CD8-positive, alpha-beta memory T cell (primary cell): ENCODE measurements at regions of chr5 and their contacts with region 1.

Region 1: DNA sequence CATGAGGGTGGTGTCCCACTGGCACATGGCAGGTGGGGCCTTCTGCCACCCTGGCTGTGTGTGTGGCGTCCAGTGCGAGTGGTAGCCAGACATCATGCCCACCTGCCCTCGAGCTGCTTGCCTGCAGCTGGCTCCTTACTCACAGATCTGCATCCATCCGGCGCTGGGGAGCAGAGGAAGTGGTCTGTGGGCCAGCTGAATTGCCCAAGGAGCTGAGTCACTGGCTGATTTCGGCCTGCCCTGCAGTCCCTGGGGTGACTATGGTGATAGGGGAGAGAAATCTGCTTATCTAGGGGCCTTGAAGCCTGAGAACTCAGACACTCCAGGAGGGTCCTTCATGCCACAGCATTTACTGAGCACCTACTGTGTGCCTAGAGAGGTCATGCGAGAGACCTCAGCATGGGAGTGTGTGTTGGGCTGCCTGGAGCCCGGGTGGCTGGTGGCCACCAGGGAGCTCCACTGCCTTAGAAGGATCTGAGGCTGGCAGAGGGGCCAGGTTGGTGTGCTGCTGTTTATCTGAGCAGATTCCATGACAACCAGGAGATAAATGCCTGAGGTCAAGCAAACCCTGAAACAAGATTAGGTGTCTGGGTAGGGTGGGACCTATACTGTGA is 57.1 kb downstream of the SLC22A5 start:
- DNase-seq: peak; percentile 37 to 83 (median 52)
- H3K4me3 ChIP-seq: peak overlapping the region; percentile 57
- H3K4me3 Mint-ChIP-seq: peak overlapping the region; percentile 61 to 89 (median 79)
- H3K27ac ChIP-seq: peak overlapping the region; percentile 84
- H3K27ac Mint-ChIP-seq: peak overlapping the region; percentile 95 to 99 (median 98)
- H3K4me1 ChIP-seq: peaks cover 100% of the 10 kb centered on the region
- H3K4me1 Mint-ChIP-seq: peaks cover 96 to 98% (median 97%) of the 10 kb centered on the region in 3 donors
- H3K27me3 ChIP-seq: no peaks in the 10 kb centered on the region
- H3K27me3 Mint-ChIP-seq: no peaks in the 10 kb centered on the region

Region 2: DNA sequence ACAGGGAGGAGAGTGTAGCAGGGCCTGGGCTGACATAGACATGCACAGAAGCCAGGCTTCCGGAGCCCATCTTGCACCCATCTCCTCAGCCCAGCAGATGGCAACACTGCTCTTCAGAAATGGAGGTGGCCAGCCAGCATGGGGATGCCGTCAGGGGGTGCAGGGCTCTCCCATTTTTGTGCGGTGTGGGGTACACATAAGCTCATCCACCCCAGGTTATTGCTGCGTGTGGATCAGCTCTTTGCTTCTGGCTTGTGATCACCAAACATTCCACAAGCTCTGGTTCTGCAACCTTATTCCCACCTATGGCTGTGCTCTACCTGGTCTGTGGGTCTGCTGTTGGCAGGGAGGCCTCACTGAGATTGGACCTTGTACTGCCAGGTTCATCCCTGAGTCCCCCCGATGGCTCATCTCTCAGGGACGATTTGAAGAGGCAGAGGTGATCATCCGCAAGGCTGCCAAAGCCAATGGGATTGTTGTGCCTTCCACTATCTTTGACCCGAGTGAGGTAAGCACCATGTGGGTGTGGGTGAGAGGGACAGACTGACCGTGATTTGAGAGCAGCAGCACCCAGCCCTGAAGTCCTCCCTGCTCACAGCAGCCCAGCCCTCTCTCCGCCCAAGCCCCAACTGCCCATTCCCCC is 39.9 kb before region 1 on chr5:
- CTCF ChIA-PET with region 1: interaction called, 17 read pairs
- POLR2A ChIA-PET with region 1: no interaction called
- DNase-seq: peak; percentile 60 to 86 (median 72)
- H3K4me3 ChIP-seq: no peak overlapping the region
- H3K4me3 Mint-ChIP-seq: peak overlapping the region in 1 of 7 donors; percentile 56
- H3K27ac ChIP-seq: no peak overlapping the region
- H3K27ac Mint-ChIP-seq: peak overlapping the region in 6 of 8 donors; percentile 7 to 85 (median 53)
- H3K4me1 ChIP-seq: peaks cover 19% of the 10 kb centered on the region
- H3K4me1 Mint-ChIP-seq: peaks cover 20 to 37% (median 23%) of the 10 kb centered on the region in 3 donors
- H3K27me3 ChIP-seq: no peaks in the 10 kb centered on the region
- H3K27me3 Mint-ChIP-seq: no peaks in the 10 kb centered on the region

Region 3: GRCh38 chr5:132437604-132438266 is 11.1 kb after region 1 on chr5:
- CTCF ChIA-PET with region 1: interaction called, 41 read pairs
- POLR2A ChIA-PET with region 1: interaction called, 15 read pairs
- DNase-seq: peak; percentile 35 to 82 (median 48)
- H3K4me3 ChIP-seq: peak overlapping the region; percentile 55
- H3K4me3 Mint-ChIP-seq: peak overlapping the region; percentile 62 to 86 (median 74)
- H3K27ac ChIP-seq: peak overlapping the region; percentile 45
- H3K27ac Mint-ChIP-seq: peak overlapping the region; percentile 89 to 98 (median 94)
- H3K4me1 ChIP-seq: peaks cover 95% of the 10 kb centered on the region
- H3K4me1 Mint-ChIP-seq: peaks cover 88 to 99% (median 95%) of the 10 kb centered on the region in 3 donors
- H3K27me3 ChIP-seq: no peaks in the 10 kb centered on the region
- H3K27me3 Mint-ChIP-seq: no peaks in the 10 kb centered on the region

Region 4: DNA sequence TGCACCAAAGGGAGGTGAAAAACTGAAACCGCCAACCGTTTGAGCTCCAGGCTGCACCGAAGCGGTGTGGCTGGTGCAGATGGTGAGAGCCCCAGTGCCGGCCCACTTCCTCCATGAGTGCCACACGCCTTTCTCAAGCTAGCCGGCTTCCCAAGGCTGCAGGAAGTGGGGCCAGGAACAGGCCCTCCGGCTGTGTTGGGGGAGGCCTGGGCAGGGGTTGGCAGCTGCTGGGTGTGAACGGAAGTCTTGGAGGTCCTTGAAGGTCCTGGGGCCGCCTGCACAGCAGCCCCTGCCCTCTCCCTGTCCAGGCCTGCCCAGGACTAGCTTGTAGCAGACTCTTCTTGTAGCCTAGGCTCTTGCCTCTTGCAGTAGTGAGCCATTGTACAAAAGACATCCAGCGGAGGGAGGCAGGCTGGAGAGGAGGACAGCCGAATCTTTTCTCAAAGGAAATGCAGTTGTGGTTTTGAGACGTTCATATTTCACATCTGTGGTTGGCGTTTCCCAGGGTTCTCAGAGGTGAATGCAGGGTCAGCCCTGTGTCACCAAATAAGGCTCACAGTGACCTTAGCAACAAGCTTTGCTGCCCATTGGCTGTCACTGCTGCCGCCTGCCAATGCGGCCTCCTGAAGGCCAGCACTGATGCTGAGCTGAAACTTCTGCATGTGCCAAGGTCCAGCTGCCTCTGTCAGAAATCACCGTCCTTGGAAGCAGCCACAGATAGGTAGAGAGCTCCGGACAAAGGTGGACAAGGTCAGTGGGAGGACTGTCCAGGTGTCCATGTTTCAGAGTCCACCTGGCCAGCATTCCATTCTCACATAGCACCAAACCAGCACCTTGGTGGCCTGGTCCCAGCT is 40.0 kb after region 1 on chr5:
- CTCF ChIA-PET with region 1: interaction called, 103 read pairs
- POLR2A ChIA-PET with region 1: interaction called, 50 read pairs
- DNase-seq: peak; percentile 63 to 88 (median 78)
- H3K4me3 ChIP-seq: peak overlapping the region; percentile 57
- H3K4me3 Mint-ChIP-seq: peak overlapping the region; percentile 72 to 92 (median 82)
- H3K27ac ChIP-seq: peak overlapping the region; percentile 64
- H3K27ac Mint-ChIP-seq: peak overlapping the region; percentile 87 to 100 (median 98)
- H3K4me1 ChIP-seq: peaks cover 95% of the 10 kb centered on the region
- H3K4me1 Mint-ChIP-seq: peaks cover 98 to 100% (median 99%) of the 10 kb centered on the region in 3 donors
- H3K27me3 ChIP-seq: no peaks in the 10 kb centered on the region
- H3K27me3 Mint-ChIP-seq: no peaks in the 10 kb centered on the region

Region 5: DNA sequence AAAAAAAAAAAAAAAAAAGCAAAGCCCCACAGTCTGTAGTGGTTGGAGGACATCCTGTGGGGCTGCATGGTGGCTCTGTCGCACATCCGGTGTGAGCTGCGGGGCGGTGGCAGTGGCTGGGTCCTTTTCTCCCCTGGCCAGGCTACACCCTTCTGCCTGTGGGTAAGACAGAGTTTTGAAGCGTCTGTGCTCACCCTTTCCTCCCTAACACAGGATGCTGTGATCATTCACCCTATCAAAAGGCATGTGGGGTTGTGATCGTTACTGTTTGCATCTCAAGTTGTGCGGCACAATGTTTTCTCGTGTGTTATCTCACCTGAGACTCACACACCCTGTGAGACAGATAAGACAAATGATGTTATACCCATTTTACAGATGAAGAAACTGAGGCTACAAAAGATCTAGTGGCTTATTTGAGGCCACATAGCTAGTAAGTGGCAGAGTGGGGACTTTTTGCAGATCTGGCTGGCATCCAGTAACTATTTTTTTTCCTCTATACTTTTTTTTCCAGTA is 46.4 kb after region 1 on chr5:
- CTCF ChIA-PET with region 1: interaction called, 42 read pairs
- POLR2A ChIA-PET with region 1: interaction called, 29 read pairs
- DNase-seq: peak; percentile 81 to 96 (median 89)
- H3K4me3 ChIP-seq: no peak overlapping the region
- H3K4me3 Mint-ChIP-seq: peak overlapping the region; percentile 39 to 86 (median 64)
- H3K27ac ChIP-seq: peak overlapping the region; percentile 62
- H3K27ac Mint-ChIP-seq: peak overlapping the region; percentile 93 to 99 (median 96)
- H3K4me1 ChIP-seq: peaks cover 86% of the 10 kb centered on the region
- H3K4me1 Mint-ChIP-seq: peaks cover 87 to 99% (median 97%) of the 10 kb centered on the region in 3 donors
- H3K27me3 ChIP-seq: no peaks in the 10 kb centered on the region
- H3K27me3 Mint-ChIP-seq: peaks cover 0 to 9% of the 10 kb centered on the region in 2 donors

Region 6: DNA sequence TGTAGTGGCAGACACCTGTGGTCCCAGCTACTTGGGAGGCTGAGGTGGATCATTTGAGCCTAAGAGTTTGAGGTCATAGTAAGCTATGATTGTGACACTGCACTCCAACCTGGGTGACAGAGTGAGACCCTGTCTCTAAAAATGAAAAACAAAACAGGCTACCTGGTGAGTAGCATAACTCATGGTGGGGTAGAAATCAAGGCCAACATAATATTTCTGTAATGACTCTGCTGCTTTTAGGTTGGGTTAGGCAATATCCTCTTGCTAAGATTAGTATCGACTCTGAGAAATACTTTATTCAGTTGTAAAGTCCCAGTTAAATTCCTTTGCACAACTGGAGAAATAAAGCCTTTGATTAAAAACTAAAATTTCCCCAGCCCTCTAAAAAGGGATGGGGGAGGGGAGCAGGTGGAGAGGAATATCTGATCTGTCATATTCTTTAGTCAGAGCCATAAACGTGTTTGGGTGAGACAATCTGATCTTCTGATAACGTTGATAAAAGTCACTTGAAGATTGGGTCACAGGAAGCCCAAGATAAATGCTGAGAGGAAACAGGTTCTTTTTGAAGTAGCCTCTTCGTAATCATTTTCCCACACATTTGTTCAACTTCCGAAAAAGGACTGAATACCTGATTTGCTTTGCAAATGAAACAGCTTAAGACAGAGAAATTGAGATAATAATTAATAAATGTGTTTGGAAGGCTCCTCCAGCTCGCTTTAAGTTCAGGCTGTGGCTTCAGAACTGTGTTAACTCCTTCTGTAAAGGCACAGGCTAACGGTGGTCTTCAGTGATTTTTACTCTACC is 262.1 kb after region 1 on chr5:
- CTCF ChIA-PET with region 1: no interaction called
- POLR2A ChIA-PET with region 1: no interaction called
- DNase-seq: peak in 2 of 5 donors; percentile 15 to 18
- H3K4me3 ChIP-seq: no peak overlapping the region
- H3K4me3 Mint-ChIP-seq: peak overlapping the region in 2 of 7 donors; percentile 26 to 27
- H3K27ac ChIP-seq: no peak overlapping the region
- H3K27ac Mint-ChIP-seq: peak overlapping the region; percentile 1 to 79 (median 56)
- H3K4me1 ChIP-seq: peaks cover 18% of the 10 kb centered on the region
- H3K4me1 Mint-ChIP-seq: peaks cover 34 to 45% (median 38%) of the 10 kb centered on the region in 3 donors
- H3K27me3 ChIP-seq: no peaks in the 10 kb centered on the region
- H3K27me3 Mint-ChIP-seq: no peaks in the 10 kb centered on the region